ENCODE measurements at regions of chr16 and their contacts with region 1.

Region 1: GRCh38 chr16:84672276-84673202 is 24.2 kb downstream of the KLHL36 start:
- DNase-seq: peak; percentile 82
- H3K4me3 Mint-ChIP-seq: no peak overlapping the region
- H3K27ac Mint-ChIP-seq: no peak overlapping the region
- H3K4me1 Mint-ChIP-seq: peaks cover 6% of the 10 kb centered on the region
- H3K27me3 Mint-ChIP-seq: peaks cover 4% of the 10 kb centered on the region

Region 2: GRCh38 chr16:84562174-84562815 is 110.2 kb before region 1 on chr16:
- CTCF ChIA-PET with region 1: no interaction called
- POLR2A ChIA-PET with region 1: no interaction called
- DNase-seq: no peak
- H3K4me3 Mint-ChIP-seq: no peak overlapping the region
- H3K27ac Mint-ChIP-seq: no peak overlapping the region
- H3K4me1 Mint-ChIP-seq: peaks cover 8% of the 10 kb centered on the region
- H3K27me3 Mint-ChIP-seq: peaks cover 4% of the 10 kb centered on the region

Region 3: GRCh38 chr16:84686707-84687298 is 14.3 kb after region 1 on chr16:
- CTCF ChIA-PET with region 1: interaction called, 21 read pairs
- POLR2A ChIA-PET with region 1: no interaction called
- DNase-seq: no peak
- H3K4me3 Mint-ChIP-seq: no peak overlapping the region
- H3K27ac Mint-ChIP-seq: no peak overlapping the region
- H3K4me1 Mint-ChIP-seq: peaks cover 8% of the 10 kb centered on the region
- H3K27me3 Mint-ChIP-seq: peaks cover 18% of the 10 kb centered on the region

Region 4: DNA sequence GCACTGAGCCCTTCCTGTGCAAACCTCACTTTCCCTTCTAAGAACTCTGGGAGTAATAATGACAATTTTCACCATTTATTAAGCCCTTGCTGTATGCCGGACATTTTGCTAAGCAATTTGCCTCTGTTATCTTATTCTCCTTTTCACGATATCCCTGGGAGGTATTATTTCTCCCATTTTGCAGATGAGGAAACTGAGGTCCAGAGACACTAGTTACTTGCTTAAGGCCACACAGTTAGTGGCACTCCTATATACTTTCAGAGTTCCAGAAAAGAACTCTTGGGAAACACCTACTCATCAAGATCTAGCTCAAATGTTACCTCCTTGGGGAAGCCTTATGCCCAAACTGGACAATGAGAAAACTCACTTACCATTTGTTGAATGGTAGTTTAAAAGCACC is 22.4 kb after region 1 on chr16:
- CTCF ChIA-PET with region 1: interaction called, 10 read pairs
- POLR2A ChIA-PET with region 1: no interaction called
- DNase-seq: no peak
- H3K4me3 Mint-ChIP-seq: no peak overlapping the region
- H3K27ac Mint-ChIP-seq: no peak overlapping the region
- H3K4me1 Mint-ChIP-seq: peaks cover 16% of the 10 kb centered on the region
- H3K27me3 Mint-ChIP-seq: peaks cover 3% of the 10 kb centered on the region

Region 5: DNA sequence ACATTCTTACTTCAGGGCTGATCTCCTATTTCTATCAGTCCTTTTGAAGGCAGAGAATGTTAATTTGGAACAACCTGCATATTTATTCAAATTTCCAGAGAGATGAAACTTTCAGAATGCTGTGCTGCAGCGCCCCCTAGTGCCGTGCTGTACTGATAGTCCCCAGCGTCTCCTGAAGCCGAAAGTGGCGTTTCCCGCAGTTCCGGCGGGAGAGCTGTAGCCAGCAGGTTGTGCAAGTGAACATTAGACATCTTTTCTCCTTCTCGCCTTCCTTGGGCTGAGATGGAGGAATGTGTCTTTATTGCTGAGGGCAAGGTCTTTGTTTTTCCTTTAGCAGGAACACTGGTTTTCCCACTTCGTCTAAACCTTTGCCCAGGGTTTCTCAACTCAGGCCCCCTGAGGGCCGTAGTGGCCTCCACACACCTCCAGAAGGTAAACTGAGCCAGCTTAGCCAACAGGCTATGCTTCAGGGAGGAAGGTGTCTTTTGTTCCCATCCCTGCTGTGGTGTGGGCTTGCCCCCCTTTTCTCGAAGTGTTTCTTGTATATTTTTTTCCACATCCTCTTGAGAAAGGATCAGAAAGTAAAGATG is 53.6 kb after region 1 on chr16:
- CTCF ChIA-PET with region 1: interaction called, 20 read pairs
- POLR2A ChIA-PET with region 1: no interaction called
- DNase-seq: peak; percentile 86
- H3K4me3 Mint-ChIP-seq: no peak overlapping the region
- H3K27ac Mint-ChIP-seq: no peak overlapping the region
- H3K4me1 Mint-ChIP-seq: peaks cover 76% of the 10 kb centered on the region
- H3K27me3 Mint-ChIP-seq: no peaks in the 10 kb centered on the region

Region 6: GRCh38 chr16:84746882-84747281 is 74.3 kb after region 1 on chr16:
- CTCF ChIA-PET with region 1: no interaction called
- POLR2A ChIA-PET with region 1: no interaction called
- DNase-seq: no peak
- H3K4me3 Mint-ChIP-seq: no peak overlapping the region
- H3K27ac Mint-ChIP-seq: no peak overlapping the region
- H3K4me1 Mint-ChIP-seq: peaks cover 28% of the 10 kb centered on the region
- H3K27me3 Mint-ChIP-seq: no peaks in the 10 kb centered on the region